CD4-positive, alpha-beta T cell (primary cell): ENCODE measurements at regions of chr13 and their contacts with region 1.

Region 1: DNA sequence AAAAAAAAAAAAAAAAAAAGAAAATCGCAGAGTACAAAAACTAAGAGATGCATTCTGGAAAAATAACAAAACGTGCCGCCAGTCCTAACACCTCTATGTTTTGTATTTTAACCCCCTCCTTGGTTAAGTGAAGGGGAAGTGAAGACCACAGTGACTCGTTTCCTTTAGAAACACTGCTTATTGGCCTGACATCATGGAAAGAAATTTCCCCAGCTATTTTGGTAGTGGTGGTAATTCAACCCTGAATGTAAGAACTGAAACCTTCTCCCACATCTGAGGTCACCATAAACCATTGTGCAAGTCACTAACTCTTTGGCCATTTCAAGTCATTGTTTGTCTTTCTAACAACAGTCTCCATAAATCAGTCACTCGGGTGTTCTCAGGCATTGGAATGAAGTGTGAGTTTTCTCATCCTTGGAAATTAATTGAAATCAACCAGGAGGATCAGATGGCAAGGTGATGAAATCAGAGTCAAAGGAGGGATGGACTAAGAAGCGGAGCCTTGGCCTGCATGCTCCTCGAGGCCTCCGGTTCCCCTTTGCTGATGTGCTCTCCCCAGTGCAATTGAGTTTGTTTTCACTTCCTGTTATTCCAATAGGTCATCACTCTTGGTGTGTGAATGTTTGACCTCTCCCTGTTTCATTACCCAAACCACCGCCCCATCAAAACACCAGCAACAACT is 443.9 kb downstream of the FGF9 start:
- DNase-seq: peak in 5 of 14 experiments; percentile 7 to 89 (median 84)
- ATAC-seq: peak; percentile 92
- H3K4me3 ChIP-seq: no peak overlapping the region
- H3K4me3 Mint-ChIP-seq: peak overlapping the region; percentile 52
- H3K27ac ChIP-seq: peak overlapping the region in 1 of 2 donors; percentile 47
- H3K27ac Mint-ChIP-seq: peak overlapping the region; percentile 85
- H3K4me1 ChIP-seq: peaks cover 12% of the 10 kb centered on the region
- H3K4me1 Mint-ChIP-seq: peaks cover 38% of the 10 kb centered on the region
- H3K27me3 ChIP-seq: no peaks in the 10 kb centered on the region
- H3K27me3 Mint-ChIP-seq: no peaks in the 10 kb centered on the region
- CTCF ChIP-seq: no peak

Region 2: DNA sequence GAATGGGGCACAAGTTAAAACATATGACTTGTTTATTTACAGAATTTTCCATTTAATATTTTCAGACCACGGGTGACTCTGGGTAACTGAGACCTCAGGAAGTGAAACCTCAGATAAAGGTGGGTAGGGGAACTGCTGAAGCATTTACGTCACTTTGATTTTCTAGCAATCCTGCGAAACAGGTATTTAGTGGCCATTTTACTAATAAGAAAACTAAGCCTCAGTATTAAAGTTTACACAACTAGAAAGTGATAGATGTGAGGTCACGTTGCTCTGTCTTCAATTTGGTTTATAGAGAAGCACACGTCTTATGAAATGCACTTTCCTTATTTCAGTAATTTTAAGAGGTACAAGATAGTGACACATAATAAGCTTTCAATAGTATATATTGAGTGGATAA is 41.1 kb before region 1 on chr13:
- CTCF ChIA-PET with region 1: no interaction called
- POLR2A ChIA-PET with region 1: no interaction called
- intact Hi-C with region 1: loop called in 1 of 2 experiments (anchors 5 kb)
- DNase-seq: peak in 1 of 14 experiments; percentile 48
- ATAC-seq: no peak
- H3K4me3 ChIP-seq: no peak overlapping the region
- H3K4me3 Mint-ChIP-seq: no peak overlapping the region
- H3K27ac ChIP-seq: no peak overlapping the region
- H3K27ac Mint-ChIP-seq: no peak overlapping the region
- H3K4me1 ChIP-seq: peaks cover 10% of the 10 kb centered on the region
- H3K4me1 Mint-ChIP-seq: peaks cover 28% of the 10 kb centered on the region
- H3K27me3 ChIP-seq: no peaks in the 10 kb centered on the region
- H3K27me3 Mint-ChIP-seq: no peaks in the 10 kb centered on the region
- CTCF ChIP-seq: no peak